ENCODE measurements at regions of chr1 and their contacts with region 1.

Region 1: GRCh38 chr1:91021686-91022517 is at the start of gene ZNF644:
- DNase-seq: peak; percentile 96
- ATAC-seq: peak; percentile 88
- H3K4me3 Mint-ChIP-seq: peak within 1 kb of the TSS; percentile 99
- H3K27ac Mint-ChIP-seq: peak within 1 kb of the TSS; percentile 99
- H3K4me1 Mint-ChIP-seq: peaks cover 51% of the 10 kb centered on the region
- H3K27me3 Mint-ChIP-seq: no peaks in the 10 kb centered on the region
- CTCF ChIP-seq: no peak
- total RNA-seq, gene ZNF644: 43.4 to 44.9 TPM

Region 2: GRCh38 chr1:90850898-90851710 is 170.8 kb before region 1 on chr1:
- CTCF ChIA-PET with region 1: no interaction called
- POLR2A ChIA-PET with region 1: no interaction called
- intact Hi-C with region 1: loop called (anchors 10 kb)
- DNase-seq: peak; percentile 78
- ATAC-seq: peak; percentile 99
- H3K4me3 Mint-ChIP-seq: peak overlapping the region; percentile 66
- H3K27ac Mint-ChIP-seq: no peak overlapping the region
- H3K4me1 Mint-ChIP-seq: peaks cover 9% of the 10 kb centered on the region
- H3K27me3 Mint-ChIP-seq: peaks cover 46% of the 10 kb centered on the region
- CTCF ChIP-seq: peak; percentile 88

Region 3: DNA sequence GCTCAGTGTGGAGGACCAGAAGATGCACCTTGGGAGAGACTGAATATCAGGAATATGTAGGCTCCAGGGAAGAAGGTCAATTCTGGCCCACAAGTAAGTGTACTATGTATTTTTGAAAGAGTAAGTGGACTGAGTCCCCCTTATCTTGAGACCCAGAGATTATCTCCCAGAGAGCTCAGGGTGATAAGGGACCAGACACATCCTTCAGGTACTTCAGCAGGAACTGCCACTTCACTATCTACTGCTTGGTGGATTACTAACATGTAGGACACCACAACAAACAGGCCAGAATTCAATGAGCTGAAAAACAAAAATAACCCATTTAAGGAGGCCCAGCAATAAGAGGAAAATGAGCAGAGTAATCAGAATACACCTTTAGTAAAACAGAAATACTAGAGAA is 119.2 kb before region 1 on chr1:
- CTCF ChIA-PET with region 1: no interaction called
- POLR2A ChIA-PET with region 1: no interaction called
- intact Hi-C with region 1: no loop called
- DNase-seq: no peak
- ATAC-seq: no peak
- H3K4me3 Mint-ChIP-seq: no peak overlapping the region
- H3K27ac Mint-ChIP-seq: no peak overlapping the region
- H3K4me1 Mint-ChIP-seq: peaks cover 9% of the 10 kb centered on the region
- H3K27me3 Mint-ChIP-seq: no peaks in the 10 kb centered on the region
- CTCF ChIP-seq: no peak

Region 4: GRCh38 chr1:91011726-91012125 is 10.2 kb before region 1 on chr1:
- CTCF ChIA-PET with region 1: interaction called, 3 read pairs
- POLR2A ChIA-PET with region 1: interaction called, 15 read pairs
- intact Hi-C with region 1: no loop called
- DNase-seq: no peak
- ATAC-seq: no peak
- H3K4me3 Mint-ChIP-seq: no peak overlapping the region
- H3K27ac Mint-ChIP-seq: peak overlapping the region; percentile 25
- H3K4me1 Mint-ChIP-seq: peaks cover 74% of the 10 kb centered on the region
- H3K27me3 Mint-ChIP-seq: no peaks in the 10 kb centered on the region
- CTCF ChIP-seq: no peak